K562 (cell line): ENCODE measurements at regions of chr6 and their contacts with region 1.

Region 1: DNA sequence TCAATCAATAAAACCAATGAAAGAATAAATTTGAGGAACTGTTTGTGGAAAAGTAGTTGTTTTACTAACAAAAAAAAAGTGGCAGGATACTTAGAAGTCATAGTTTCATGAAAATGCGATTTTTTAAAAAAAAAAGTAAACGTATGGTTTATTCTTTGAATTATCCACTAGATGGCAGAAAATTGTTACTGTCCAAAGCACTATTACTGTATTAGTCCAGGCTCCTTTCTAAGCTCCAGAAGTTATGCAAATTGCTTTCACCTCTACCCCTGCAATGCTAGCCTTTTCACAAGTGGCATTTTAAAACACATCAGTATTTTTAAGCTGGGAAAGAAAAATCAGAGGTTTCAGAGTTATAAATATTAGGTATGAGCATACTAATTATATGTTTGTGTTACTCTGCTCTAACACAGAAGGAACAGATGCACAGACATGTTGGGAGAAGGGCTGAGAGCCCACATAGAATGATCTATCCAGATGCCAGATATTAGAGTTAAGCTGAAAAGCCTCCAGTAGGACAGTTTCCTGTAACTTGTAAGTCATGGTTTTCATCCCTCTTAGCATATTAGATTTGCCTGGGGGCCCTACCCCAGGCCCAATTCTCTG is 63.9 kb downstream of the FHL5 start:
- DNase-seq: peak; percentile 8 to 21 (median 14)
- ATAC-seq: peak; percentile 82
- H3K4me3 ChIP-seq: no peak overlapping the region
- H3K27ac ChIP-seq: no peak overlapping the region
- H3K4me1 ChIP-seq: 0 out of 5 replicates have a peak, but pooled peaks cover 0 to 5% of the 10 kb centered on the region in 2 experiments
- H3K27me3 ChIP-seq: no peaks in the 10 kb centered on the region
- CTCF ChIP-seq: peak in 2 of 3 experiments; percentile 9 to 64; a peak in 3 of 6 replicates
- EP300 ChIP-seq: no peak
- POLR2A ChIP-seq: no peak
- RAD21 ChIP-seq: peak; percentile 65 to 85

Region 2: DNA sequence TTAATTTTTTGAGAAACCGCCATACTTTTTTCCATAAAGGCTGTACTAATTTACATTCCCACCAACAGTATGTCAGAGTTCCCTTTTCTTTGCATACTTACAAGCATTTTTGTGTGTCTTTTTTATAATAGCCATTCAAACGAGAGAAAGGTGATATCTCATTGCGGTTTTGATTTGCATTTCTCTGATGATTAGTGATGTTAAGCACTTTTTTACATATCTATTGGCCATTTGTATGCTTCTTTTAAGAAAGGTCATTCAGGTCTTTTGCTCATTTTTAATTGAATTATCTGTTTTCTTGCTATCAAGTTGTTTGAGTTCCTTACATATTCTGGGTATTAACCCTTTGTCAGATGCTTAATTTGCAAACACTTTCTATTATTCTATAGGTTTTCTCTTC is 281.4 kb before region 1 on chr6:
- CTCF ChIA-PET with region 1: no interaction called
- POLR2A ChIA-PET with region 1: no interaction called
- in situ Hi-C with region 1: no loop called
- intact Hi-C with region 1: no loop called
- DNase-seq: no peak
- ATAC-seq: no peak
- H3K4me3 ChIP-seq: no peak overlapping the region
- H3K27ac ChIP-seq: no peak overlapping the region
- H3K4me1 ChIP-seq: no peaks in the 10 kb centered on the region
- H3K27me3 ChIP-seq: no peaks in the 10 kb centered on the region
- CTCF ChIP-seq: no peak
- EP300 ChIP-seq: no peak
- POLR2A ChIP-seq: no peak
- RAD21 ChIP-seq: no peak

Region 3: DNA sequence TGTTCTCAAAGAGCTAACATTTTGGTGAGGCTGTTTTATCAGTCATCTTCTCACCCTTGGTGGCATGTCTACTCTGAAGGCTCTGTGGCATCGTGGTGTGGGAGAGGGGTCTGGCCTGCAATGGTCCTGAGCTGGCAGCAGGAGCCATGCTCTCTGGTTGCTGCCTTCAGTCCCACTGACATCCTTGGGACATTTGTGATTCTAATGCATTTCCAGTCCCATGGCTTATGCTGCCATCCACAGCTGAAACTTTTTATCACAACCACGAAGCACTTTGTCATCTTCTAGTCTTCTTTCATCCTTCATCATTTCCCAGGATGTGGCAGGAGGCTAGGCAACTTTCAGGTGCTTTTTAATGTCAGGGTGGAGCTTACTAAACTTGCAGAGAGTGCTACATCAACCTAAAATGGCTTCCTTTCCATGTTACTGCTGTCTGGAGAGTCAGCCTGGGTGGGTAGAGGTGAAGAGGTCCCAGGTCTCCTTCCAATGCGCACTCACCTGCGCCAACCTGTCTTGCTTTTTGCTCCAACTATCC is 133.4 kb after region 1 on chr6:
- CTCF ChIA-PET with region 1: no interaction called
- POLR2A ChIA-PET with region 1: no interaction called
- in situ Hi-C with region 1: no loop called
- intact Hi-C with region 1: loop called (anchors 5 kb)
- DNase-seq: no peak
- ATAC-seq: no peak; the same call in 2 of the 3 replicates
- H3K4me3 ChIP-seq: no peak overlapping the region
- H3K27ac ChIP-seq: no peak overlapping the region
- H3K4me1 ChIP-seq: no peaks in the 10 kb centered on the region
- H3K27me3 ChIP-seq: peaks cover 6 to 23% of the 10 kb centered on the region in 2 experiments; a peak in 3 of 5 replicates
- CTCF ChIP-seq: peak in 1 of 3 experiments; percentile 18; a peak in 2 of 6 replicates
- EP300 ChIP-seq: no peak
- POLR2A ChIP-seq: no peak
- RAD21 ChIP-seq: peak in 1 of 2 experiments; percentile 33; a peak in 1 of 4 replicates

Region 4: DNA sequence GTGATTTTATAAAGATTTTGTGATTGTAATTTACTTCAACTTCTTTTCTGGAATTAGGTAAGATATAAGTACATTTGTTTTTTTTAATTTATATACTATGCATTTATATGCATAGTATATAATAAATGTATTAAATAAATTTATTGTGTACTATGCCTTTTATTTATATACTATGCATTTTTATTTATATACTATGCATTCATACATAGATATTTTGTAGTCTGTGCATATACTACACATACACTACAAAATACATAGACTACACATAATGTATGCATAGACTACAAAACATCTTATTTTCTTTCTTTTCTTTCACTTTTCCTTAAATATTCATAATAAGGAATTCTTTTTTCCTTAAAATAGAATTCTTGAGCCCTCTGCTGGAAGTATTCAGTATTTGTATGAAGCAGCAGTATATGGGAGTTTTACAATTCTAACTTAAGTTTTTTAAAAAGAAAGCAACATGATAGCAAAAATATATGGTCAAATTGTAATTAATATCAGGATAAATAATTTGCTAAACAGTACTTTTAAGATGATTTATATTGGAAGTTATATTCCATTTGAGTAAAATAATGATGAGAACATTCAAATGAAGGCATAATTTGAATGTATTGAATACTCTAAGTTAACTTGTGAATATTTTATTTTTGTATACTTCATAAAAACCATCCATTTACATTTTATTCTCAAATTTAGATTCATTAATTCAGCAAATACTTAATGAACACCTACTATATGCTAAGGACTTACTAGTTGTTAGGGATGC is 427.0 kb after region 1 on chr6:
- CTCF ChIA-PET with region 1: interaction called, 12 read pairs
- POLR2A ChIA-PET with region 1: no interaction called
- in situ Hi-C with region 1: loop called (anchors 5 kb)
- intact Hi-C with region 1: loop called (anchors 1 kb)
- DNase-seq: peak in 1 of 4 experiments; percentile 16
- ATAC-seq: no peak; the same call in 2 of the 3 replicates
- H3K4me3 ChIP-seq: no peak overlapping the region
- H3K27ac ChIP-seq: no peak overlapping the region
- H3K4me1 ChIP-seq: no peaks in the 10 kb centered on the region
- H3K27me3 ChIP-seq: peaks cover 0 to 4% of the 10 kb centered on the region in 2 experiments; a peak in 3 of 5 replicates
- CTCF ChIP-seq: peak in 2 of 3 experiments; percentile 18 to 68; a peak in 3 of 6 replicates
- EP300 ChIP-seq: no peak
- POLR2A ChIP-seq: no peak
- RAD21 ChIP-seq: peak; percentile 83 to 92

Region 5: DNA sequence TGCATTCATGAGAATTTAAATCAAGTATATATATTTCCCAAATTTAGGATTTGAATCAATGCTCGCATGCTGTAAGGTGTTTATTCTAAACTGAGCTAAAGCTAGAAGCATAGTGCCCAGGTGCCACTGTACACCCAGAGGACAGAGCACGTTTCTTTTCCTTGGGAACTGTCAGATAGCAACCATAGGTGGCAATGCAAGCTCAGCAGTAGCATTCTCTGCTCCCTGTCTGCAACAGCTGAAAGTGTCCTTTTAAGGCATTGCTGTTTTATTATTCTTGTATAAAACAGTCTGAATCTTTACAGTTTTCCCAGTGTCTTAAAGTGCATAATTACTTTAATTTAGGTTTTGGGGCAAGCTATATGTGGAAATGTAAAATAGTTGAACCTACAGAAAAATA is 1099.5 kb after region 1 on chr6:
- CTCF ChIA-PET with region 1: no interaction called
- POLR2A ChIA-PET with region 1: no interaction called
- in situ Hi-C with region 1: no loop called
- intact Hi-C with region 1: no loop called
- DNase-seq: no peak
- ATAC-seq: no peak
- H3K4me3 ChIP-seq: no peak overlapping the region
- H3K27ac ChIP-seq: no peak overlapping the region
- H3K4me1 ChIP-seq: no peaks in the 10 kb centered on the region
- H3K27me3 ChIP-seq: no peaks in the 10 kb centered on the region
- CTCF ChIP-seq: no peak
- EP300 ChIP-seq: no peak
- POLR2A ChIP-seq: no peak
- RAD21 ChIP-seq: no peak